Ovary (tissue), 10 donors: ENCODE measurements at regions of chr2 and their contacts with region 1.

Region 1: GRCh38 chr2:160406591-160407392 is 86.8 kb downstream of the RBMS1 start:
- DNase-seq: peak in 4 of 5 donors; percentile 58 to 65 (median 62)
- H3K4me3 ChIP-seq: peak overlapping the region; percentile 78
- H3K27ac ChIP-seq: peak overlapping the region; percentile 92 to 93
- H3K4me1 ChIP-seq: peaks cover 19% of the 10 kb centered on the region
- H3K27me3 ChIP-seq: no peaks in the 10 kb centered on the region
- CTCF ChIP-seq: no peak
- EP300 ChIP-seq: no peak
- POLR2A ChIP-seq: peak; percentile 29

Region 2: DNA sequence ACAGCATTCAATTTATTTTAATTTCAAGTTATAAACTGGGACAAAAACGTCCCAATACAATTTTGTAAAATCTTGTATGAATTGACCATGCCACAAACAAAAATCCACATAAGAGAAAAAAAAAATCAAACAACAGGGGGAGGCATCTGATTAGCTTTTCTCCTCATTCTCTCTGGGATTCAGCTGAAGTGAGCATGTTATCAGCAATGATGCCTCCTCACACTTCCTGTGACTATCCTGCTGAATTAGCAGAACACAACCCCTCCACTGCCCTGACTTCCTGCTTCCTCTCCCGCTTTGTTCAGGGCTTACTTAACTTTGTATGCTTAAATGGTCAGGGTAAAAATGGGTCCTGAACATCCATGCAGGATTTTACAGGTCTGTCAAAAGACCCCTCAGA is 74.5 kb before region 1 on chr2:
- intact Hi-C with region 1: loop called in 1 of 4 experiments (anchors 10 kb)
- DNase-seq: peak in 2 of 5 donors; percentile 30 to 44
- H3K4me3 ChIP-seq: no peak overlapping the region
- H3K27ac ChIP-seq: no peak overlapping the region
- H3K4me1 ChIP-seq: peaks cover 16% of the 10 kb centered on the region
- H3K27me3 ChIP-seq: no peaks in the 10 kb centered on the region
- CTCF ChIP-seq: no peak
- EP300 ChIP-seq: no peak
- POLR2A ChIP-seq: no peak

Region 3: DNA sequence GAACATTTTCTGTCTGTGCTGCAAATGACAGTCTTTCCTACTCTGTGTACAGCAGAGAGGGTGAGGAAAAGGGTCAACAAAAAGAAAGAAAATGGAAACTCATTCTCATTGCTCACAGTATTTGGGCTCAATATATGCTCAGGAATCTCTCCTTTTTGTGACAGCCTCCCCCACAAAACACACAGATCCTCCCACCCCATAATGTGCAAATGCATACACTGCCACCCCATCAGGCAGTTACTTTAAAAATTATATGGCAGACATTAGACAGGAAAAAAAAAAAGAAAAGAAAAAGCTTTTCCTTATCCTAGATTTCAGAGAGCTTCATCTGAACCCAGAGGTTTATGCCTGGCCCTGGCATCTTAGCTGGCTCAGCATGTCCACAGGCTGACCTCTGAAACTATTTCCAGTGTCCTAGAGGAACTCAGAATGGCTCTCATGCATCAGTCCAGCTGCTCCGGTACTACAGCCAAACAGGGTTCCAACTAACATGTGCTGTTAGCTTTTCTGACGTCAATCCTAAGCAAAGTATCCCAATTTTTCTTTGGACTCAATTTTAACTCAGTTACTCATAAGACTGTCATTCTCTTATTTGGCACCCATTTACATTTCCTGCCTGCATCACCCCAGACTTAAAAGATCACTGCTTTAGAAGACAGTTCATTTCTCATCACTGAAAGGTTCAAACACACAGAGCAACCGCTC is 19.1 kb before region 1 on chr2:
- intact Hi-C with region 1: loop called in 1 of 4 experiments (anchors 2 kb)
- DNase-seq: peak; percentile 67 to 83 (median 77)
- H3K4me3 ChIP-seq: no peak overlapping the region
- H3K27ac ChIP-seq: peak overlapping the region in 1 of 2 donors; percentile 68
- H3K4me1 ChIP-seq: peaks cover 26% of the 10 kb centered on the region
- H3K27me3 ChIP-seq: no peaks in the 10 kb centered on the region
- CTCF ChIP-seq: no peak
- EP300 ChIP-seq: no peak
- POLR2A ChIP-seq: no peak

Region 4: DNA sequence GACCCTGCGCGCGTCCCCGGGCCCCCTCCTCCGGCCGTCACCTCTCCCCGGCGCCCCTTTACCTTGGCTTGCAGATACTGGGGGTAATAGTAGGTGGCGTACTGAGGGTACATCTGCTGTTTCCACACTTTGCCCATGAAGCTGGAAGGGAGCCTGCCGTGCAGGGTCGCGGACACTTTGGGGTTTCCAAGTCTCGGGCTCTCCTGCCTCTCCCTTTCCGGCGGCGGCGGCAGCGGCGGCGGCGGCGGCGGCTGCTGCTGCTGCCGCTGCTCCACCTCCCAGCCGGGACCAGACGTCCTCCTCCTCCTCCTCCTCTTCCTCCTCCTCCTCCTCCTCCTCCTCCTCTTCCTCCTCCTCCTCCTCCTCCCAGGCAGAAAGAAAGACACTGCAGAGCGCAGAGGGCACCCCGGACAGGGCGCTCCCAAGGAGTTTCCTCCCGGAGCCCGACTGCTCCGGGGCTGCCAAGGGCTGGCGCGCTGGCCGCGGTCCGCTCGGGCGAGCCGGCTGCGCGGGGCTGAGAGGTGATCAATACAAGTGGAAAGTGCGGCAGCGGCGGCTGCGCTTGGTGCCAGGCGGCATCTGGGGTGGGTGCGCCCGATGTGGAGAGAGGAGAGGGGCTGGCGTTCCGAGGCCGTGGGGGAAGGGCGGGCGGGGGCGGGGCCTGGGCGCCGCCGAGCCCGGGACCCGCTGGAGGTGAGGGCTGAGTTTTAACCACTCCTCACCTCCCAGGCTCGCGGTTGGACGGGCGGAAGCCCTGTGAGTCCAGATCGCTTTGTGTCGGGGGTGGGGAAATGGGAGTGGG is 86.6 kb after region 1 on chr2 and contains the start of gene RBMS1:
- intact Hi-C with region 1: loop called in 1 of 4 experiments (anchors 10 kb)
- DNase-seq: peak; percentile 70 to 76 (median 75)
- H3K4me3 ChIP-seq: peak within 1 kb of the TSS; percentile 94
- H3K27ac ChIP-seq: peak within 1 kb of the TSS; percentile 40 to 98
- H3K4me1 ChIP-seq: peaks cover 5% of the 10 kb centered on the region
- H3K27me3 ChIP-seq: no peaks in the 10 kb centered on the region
- CTCF ChIP-seq: no peak
- EP300 ChIP-seq: no peak
- POLR2A ChIP-seq: no peak
- total RNA-seq, gene RBMS1: 67.5 to 91.9 (median 73.8) TPM

Region 5: GRCh38 chr2:160970052-160970965 is 563.5 kb after region 1 on chr2:
- intact Hi-C with region 1: loop called in 1 of 4 experiments (anchors 10 kb)
- DNase-seq: peak in 4 of 5 donors; percentile 27 to 64 (median 34)
- H3K4me3 ChIP-seq: no peak overlapping the region
- H3K27ac ChIP-seq: peak overlapping the region in 1 of 2 donors; percentile 44
- H3K4me1 ChIP-seq: peaks cover 4% of the 10 kb centered on the region
- H3K27me3 ChIP-seq: no peaks in the 10 kb centered on the region
- CTCF ChIP-seq: peak; percentile 60 to 88 (median 81)
- EP300 ChIP-seq: no peak
- POLR2A ChIP-seq: no peak

Region 6: GRCh38 chr2:162244541-162245031 is 1837.8 kb after region 1 on chr2:
- intact Hi-C with region 1: no loop called
- DNase-seq: no peak
- H3K4me3 ChIP-seq: no peak overlapping the region
- H3K27ac ChIP-seq: no peak overlapping the region
- H3K4me1 ChIP-seq: peaks cover 2% of the 10 kb centered on the region
- H3K27me3 ChIP-seq: no peaks in the 10 kb centered on the region
- CTCF ChIP-seq: no peak
- EP300 ChIP-seq: no peak
- POLR2A ChIP-seq: no peak